ENCODE measurements at regions of chr19 and their contacts with region 1.

Region 1: DNA sequence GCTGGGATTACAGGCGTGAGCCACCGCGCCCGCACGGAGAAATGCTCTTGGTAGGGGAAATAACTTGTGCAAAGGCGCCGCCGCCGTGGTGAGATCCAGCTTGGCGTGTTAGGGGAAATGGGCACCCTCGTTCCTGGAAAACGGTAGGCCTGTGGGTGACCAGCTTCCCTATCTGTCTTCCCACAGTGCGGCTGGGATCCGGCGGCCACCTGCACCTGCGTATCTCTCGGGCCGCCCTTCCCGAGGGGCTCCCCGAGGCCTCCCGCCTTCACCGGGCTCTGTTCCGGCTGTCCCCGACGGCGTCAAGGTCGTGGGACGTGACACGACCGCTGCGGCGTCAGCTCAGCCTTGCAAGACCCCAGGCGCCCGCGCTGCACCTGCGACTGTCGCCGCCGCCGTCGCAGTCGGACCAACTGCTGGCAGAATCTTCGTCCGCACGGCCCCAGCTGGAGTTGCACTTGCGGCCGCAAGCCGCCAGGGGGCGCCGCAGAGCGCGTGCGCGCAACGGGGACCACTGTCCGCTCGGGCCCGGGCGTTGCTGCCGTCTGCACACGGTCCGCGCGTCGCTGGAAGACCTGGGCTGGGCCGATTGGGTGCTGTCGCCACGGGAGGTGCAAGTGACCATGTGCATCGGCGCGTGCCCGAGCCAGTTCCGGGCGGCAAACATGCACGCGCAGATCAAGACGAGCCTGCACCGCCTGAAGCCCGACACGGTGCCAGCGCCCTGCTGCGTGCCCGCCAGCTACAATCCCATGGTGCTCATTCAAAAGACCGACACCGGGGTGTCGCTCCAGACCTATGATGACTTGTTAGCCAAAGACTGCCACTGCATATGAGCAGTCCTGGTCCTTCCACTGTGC is 2.4 kb downstream of the GDF15 start:
- H3K4me3 ChIP-seq: no peak overlapping the region; the same call in 1 of the 2 replicates
- H3K27ac ChIP-seq: no peak overlapping the region
- H3K4me1 ChIP-seq: no peaks in the 10 kb centered on the region
- CTCF ChIP-seq: peak; percentile 99

Region 2: GRCh38 chr19:18349524-18350128 is 38.7 kb before region 1 on chr19:
- CTCF ChIA-PET with region 1: interaction called, 46 read pairs
- POLR2A ChIA-PET with region 1: no interaction called
- H3K4me3 ChIP-seq: no peak overlapping the region
- H3K27ac ChIP-seq: no peak overlapping the region
- H3K4me1 ChIP-seq: no peaks in the 10 kb centered on the region
- CTCF ChIP-seq: peak; percentile 68

Region 3: GRCh38 chr19:18364826-18365528 is 23.4 kb before region 1 on chr19:
- CTCF ChIA-PET with region 1: interaction called, 23 read pairs
- POLR2A ChIA-PET with region 1: no interaction called
- H3K4me3 ChIP-seq: no peak overlapping the region
- H3K27ac ChIP-seq: peak overlapping the region; percentile 94
- H3K4me1 ChIP-seq: no peaks in the 10 kb centered on the region; the same call in 1 of the 2 replicates
- CTCF ChIP-seq: no peak

Region 4: DNA sequence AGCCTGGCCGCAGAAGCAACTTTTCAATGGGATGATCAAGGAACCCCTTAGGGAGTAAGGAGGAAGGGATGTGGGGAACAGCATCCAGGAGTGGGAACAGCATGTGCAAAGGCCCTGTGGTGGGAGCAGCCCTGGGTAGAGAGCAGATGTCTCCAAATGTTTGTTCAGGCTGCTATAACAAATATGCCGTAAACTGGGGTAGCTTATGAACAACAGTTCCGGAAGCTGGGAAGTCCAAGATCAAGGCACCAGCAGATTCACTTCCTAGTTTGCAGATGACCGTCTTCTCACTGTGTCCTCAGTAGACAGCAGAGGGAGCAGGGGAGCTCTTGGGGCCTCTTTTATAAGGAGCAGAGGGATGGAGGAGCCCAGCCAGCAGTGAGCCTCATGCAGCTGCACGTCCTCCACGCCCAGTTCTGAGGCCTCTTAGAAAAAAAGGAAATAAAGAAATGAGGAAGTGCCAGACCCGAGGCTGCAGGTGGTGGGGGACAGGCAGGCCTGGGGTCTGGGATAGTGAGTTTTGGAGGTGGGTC is 13.3 kb after region 1 on chr19:
- CTCF ChIA-PET with region 1: interaction called, 68 read pairs
- POLR2A ChIA-PET with region 1: no interaction called
- H3K4me3 ChIP-seq: no peak overlapping the region
- H3K27ac ChIP-seq: no peak overlapping the region
- H3K4me1 ChIP-seq: no peaks in the 10 kb centered on the region
- CTCF ChIP-seq: peak; percentile 56; the same call in 1 of the 2 replicates

Region 5: GRCh38 chr19:18408053-18408476 is 19.7 kb after region 1 on chr19:
- CTCF ChIA-PET with region 1: interaction called, 68 read pairs
- POLR2A ChIA-PET with region 1: no interaction called
- H3K4me3 ChIP-seq: no peak overlapping the region
- H3K27ac ChIP-seq: no peak overlapping the region
- H3K4me1 ChIP-seq: no peaks in the 10 kb centered on the region
- CTCF ChIP-seq: peak; percentile 52; the same call in 1 of the 2 replicates

Region 6: DNA sequence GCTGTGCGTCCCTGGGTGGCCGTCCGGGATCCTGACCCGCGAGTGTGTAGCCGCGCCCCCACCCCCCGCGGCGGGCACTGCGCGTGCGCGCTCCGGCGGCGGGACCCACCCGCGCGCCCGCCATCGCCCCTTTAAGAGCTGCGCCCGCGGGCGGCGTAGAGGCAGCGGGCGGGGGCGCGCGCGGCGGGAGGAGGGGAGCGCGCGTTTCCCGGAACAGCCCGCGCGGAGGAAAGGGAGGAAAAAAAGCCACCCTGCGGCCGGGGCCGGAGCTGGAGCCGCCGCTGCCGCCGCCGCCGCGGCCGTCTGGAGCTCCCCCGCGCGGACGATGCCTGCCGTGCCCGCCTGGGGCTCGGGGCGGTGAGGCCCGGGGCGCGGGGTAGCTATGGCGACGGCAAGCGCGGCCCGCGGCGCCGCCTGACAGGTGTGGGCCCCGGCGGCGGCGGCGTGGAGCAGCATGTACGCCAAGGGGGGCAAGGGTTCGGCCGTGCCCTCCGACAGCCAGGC is 30.9 kb after region 1 on chr19 and contains the start of gene SSBP4:
- CTCF ChIA-PET with region 1: interaction called, 32 read pairs
- POLR2A ChIA-PET with region 1: interaction called, 3 read pairs
- H3K4me3 ChIP-seq: peak within 1 kb of the TSS; percentile 53
- H3K27ac ChIP-seq: peak within 1 kb of the TSS; percentile 63; the same call in 1 of the 2 replicates
- H3K4me1 ChIP-seq: peaks cover 9% of the 10 kb centered on the region; the same call in 1 of the 2 replicates
- CTCF ChIP-seq: no peak